HEK293 (cell line): ENCODE measurements at regions of chr9 and their contacts with region 1.

Region 1: GRCh38 chr9:35954942-35955546 is 2.9 kb downstream of the OR2S2 start:
- H3K4me3 ChIP-seq: no peak overlapping the region
- H3K27ac ChIP-seq: no peak overlapping the region
- H3K4me1 ChIP-seq: no peaks in the 10 kb centered on the region
- CTCF ChIP-seq: peak; percentile 51; the same call in 1 of the 2 replicates

Region 2: GRCh38 chr9:35729700-35730485 is 225.2 kb before region 1 on chr9:
- CTCF ChIA-PET with region 1: no interaction called
- POLR2A ChIA-PET with region 1: no interaction called
- H3K4me3 ChIP-seq: no peak overlapping the region
- H3K27ac ChIP-seq: no peak overlapping the region
- H3K4me1 ChIP-seq: peaks cover 13% of the 10 kb centered on the region
- CTCF ChIP-seq: peak; percentile 82; the same call in 1 of the 2 replicates

Region 3: GRCh38 chr9:35903049-35903448 is 52.0 kb before region 1 on chr9:
- CTCF ChIA-PET with region 1: interaction called, 18 read pairs
- POLR2A ChIA-PET with region 1: no interaction called
- H3K4me3 ChIP-seq: no peak overlapping the region
- H3K27ac ChIP-seq: no peak overlapping the region
- H3K4me1 ChIP-seq: peaks cover 5% of the 10 kb centered on the region
- CTCF ChIP-seq: 0 out of 2 replicates have a peak, but pooled peaks have one; percentile 19

Region 4: DNA sequence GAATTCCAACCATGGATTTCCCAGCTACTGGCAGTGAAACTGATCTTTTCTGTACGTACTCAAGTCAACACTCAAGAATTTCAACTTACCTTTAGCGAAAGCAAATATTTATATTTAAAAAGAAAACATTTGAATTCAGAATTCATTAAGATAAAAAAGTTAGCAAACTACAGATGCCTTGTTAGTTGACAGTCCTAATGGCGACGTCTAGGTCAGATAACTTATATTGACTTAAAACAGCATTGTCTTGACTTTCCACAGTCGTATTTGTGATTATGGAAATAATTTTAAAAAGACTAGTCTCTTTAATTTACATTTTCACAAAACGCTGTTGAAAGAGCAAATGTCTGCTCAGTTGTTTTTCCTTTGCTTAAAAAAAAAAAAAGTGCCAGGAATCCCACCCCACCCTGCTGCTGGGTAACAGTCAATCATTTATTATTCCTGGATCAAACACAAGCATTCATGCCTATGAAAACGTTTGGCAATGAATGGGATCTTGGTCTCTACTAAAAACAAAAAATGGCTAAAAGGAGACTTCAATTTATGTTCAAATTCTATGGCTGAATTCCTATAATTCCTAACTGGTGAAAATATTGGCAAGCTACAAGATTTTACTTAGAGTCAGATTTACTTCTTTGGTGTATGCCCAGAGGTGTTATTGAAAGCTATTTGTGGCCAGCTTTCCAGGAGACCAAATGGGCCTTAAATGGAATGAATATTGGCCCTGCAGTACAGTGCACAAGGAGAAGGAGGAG is 19.1 kb before region 1 on chr9:
- CTCF ChIA-PET with region 1: interaction called, 14 read pairs
- POLR2A ChIA-PET with region 1: no interaction called
- H3K4me3 ChIP-seq: no peak overlapping the region
- H3K27ac ChIP-seq: no peak overlapping the region
- H3K4me1 ChIP-seq: no peaks in the 10 kb centered on the region
- CTCF ChIP-seq: no peak

Region 5: GRCh38 chr9:35967042-35967441 is 12.0 kb after region 1 on chr9:
- CTCF ChIA-PET with region 1: interaction called, 19 read pairs
- POLR2A ChIA-PET with region 1: no interaction called
- H3K4me3 ChIP-seq: no peak overlapping the region
- H3K27ac ChIP-seq: no peak overlapping the region
- H3K4me1 ChIP-seq: no peaks in the 10 kb centered on the region
- CTCF ChIP-seq: no peak

Region 6: DNA sequence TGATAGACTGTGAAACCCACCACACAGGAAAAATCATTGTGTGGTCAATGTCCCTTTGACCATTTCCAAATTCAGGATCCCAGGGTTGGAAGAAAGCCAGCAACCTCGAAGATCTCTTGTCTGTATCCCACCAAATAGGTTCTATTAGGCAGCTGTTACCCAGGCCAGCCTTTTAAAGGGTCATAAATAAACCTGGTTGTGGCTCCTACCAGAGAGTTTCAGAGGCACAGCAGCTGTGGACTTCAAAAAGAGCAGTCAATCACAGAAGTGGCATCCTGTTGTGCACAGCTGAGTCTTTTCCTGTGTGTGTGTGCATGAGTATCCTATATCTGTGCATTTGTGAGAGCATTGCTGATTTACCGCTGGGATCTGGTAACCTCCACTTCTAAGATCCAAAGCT is 26.7 kb after region 1 on chr9:
- CTCF ChIA-PET with region 1: interaction called, 13 read pairs
- POLR2A ChIA-PET with region 1: no interaction called
- H3K4me3 ChIP-seq: no peak overlapping the region
- H3K27ac ChIP-seq: no peak overlapping the region
- H3K4me1 ChIP-seq: no peaks in the 10 kb centered on the region
- CTCF ChIP-seq: no peak

Region 7: GRCh38 chr9:36148311-36149051 is 193.4 kb after region 1 on chr9:
- CTCF ChIA-PET with region 1: no interaction called
- POLR2A ChIA-PET with region 1: no interaction called
- H3K4me3 ChIP-seq: no peak overlapping the region
- H3K27ac ChIP-seq: no peak overlapping the region
- H3K4me1 ChIP-seq: peaks cover 3% of the 10 kb centered on the region; the same call in 1 of the 2 replicates
- CTCF ChIP-seq: no peak

Region 8: DNA sequence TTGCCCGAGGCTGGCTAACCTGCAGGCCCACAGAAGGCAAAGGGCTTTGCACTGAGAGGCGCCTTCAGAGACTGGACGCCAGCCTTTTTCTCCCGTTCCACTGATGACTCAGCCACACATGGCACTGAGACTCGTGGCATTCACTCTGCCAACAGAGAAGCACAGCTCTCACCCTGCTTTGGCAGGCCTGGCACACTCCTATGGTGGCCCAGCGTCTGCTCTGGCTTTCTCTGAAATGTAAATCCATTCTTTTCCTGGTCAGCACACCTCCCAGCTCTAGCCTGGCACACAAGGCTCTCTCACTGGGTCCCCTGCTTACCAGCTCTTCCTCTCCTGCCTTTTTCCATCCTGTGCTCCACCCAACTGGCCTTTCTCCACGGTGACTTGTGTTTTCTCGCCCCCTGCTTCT is 611.8 kb after region 1 on chr9:
- CTCF ChIA-PET with region 1: no interaction called
- POLR2A ChIA-PET with region 1: no interaction called
- H3K4me3 ChIP-seq: no peak overlapping the region
- H3K27ac ChIP-seq: no peak overlapping the region
- H3K4me1 ChIP-seq: no peaks in the 10 kb centered on the region
- CTCF ChIP-seq: no peak